SK-N-SH (cell line): ENCODE measurements at regions of chr5 and their contacts with region 1.

Region 1: GRCh38 chr5:119470851-119471451 is 18.7 kb downstream of the HSD17B4 start:
- DNase-seq: no peak
- H3K4me3 ChIP-seq: peak overlapping the region in 1 of 2 experiments; percentile 13; a peak in 1 of 4 replicates
- H3K27ac ChIP-seq: no peak overlapping the region
- H3K4me1 ChIP-seq: no peaks in the 10 kb centered on the region
- H3K27me3 ChIP-seq: no peaks in the 10 kb centered on the region
- CTCF ChIP-seq: peak; percentile 76
- EP300 ChIP-seq: no peak
- RAD21 ChIP-seq: peak; percentile 85

Region 2: GRCh38 chr5:119445544-119445943 is 25.4 kb before region 1 on chr5:
- CTCF ChIA-PET with region 1: no interaction called
- POLR2A ChIA-PET with region 1: no interaction called
- DNase-seq: no peak
- H3K4me3 ChIP-seq: no peak overlapping the region
- H3K27ac ChIP-seq: no peak overlapping the region
- H3K4me1 ChIP-seq: no peaks in the 10 kb centered on the region
- H3K27me3 ChIP-seq: no peaks in the 10 kb centered on the region
- CTCF ChIP-seq: no peak
- EP300 ChIP-seq: no peak
- RAD21 ChIP-seq: no peak

Region 3: DNA sequence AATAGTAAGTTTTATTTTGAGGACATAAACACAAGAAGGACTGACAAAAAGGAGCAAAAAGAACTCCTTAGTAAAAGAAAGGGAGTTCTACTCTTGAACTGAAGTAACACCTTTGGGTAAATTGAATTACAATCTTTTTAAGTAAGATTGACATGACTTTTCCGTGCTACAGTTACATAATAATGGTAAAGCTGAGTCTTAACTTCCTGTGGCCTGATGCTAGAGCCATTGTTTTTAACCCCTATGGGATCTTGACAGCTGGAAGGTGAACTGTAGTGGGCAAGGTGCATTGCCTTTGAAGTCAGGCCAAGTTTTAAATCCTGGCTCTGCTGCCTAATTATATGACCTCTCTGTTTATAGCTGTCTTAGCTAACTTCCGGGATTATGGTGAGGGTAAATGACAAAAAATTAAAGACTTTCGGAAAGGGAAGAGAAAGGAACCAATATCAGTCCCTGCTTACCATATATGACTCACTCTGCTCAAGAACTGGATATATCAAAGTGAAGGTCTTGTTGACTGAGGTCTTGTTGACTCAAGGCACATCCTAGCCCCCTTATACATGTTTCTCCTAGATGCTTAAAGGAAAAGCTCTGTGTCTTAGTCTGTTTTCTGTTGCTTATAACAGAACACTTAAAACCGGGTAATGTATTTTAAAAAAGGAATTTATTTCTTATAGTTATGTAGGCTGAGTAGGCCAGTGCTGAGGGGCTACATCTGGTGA is 11.9 kb before region 1 on chr5:
- CTCF ChIA-PET with region 1: interaction called, 10 read pairs
- POLR2A ChIA-PET with region 1: no interaction called
- DNase-seq: no peak
- H3K4me3 ChIP-seq: no peak overlapping the region
- H3K27ac ChIP-seq: no peak overlapping the region
- H3K4me1 ChIP-seq: no peaks in the 10 kb centered on the region; a peak in 1 of 4 replicates
- H3K27me3 ChIP-seq: no peaks in the 10 kb centered on the region
- CTCF ChIP-seq: no peak
- EP300 ChIP-seq: no peak
- RAD21 ChIP-seq: no peak